ENCODE measurements at regions of chr20 and their contacts with region 1.

Region 1: GRCh38 chr20:57346477-57346876 is 4.6 kb upstream of the RAE1 start:
- DNase-seq: peak; percentile 55 to 78
- ATAC-seq: peak; percentile 35 to 59 (median 40)
- H3K4me3 ChIP-seq: no peak overlapping the region
- H3K4me3 Mint-ChIP-seq: no peak overlapping the region
- H3K27ac ChIP-seq: no peak overlapping the region
- H3K27ac Mint-ChIP-seq: no peak overlapping the region
- H3K4me1 ChIP-seq: peaks cover under 1% of the 10 kb centered on the region
- H3K4me1 Mint-ChIP-seq: peaks cover 0 to 4% of the 10 kb centered on the region in 2 donors
- H3K27me3 ChIP-seq: peaks cover 3% of the 10 kb centered on the region
- H3K27me3 Mint-ChIP-seq: peaks cover 11 to 27% of the 10 kb centered on the region in 2 donors
- CTCF ChIP-seq: peak; percentile 77

Region 2: DNA sequence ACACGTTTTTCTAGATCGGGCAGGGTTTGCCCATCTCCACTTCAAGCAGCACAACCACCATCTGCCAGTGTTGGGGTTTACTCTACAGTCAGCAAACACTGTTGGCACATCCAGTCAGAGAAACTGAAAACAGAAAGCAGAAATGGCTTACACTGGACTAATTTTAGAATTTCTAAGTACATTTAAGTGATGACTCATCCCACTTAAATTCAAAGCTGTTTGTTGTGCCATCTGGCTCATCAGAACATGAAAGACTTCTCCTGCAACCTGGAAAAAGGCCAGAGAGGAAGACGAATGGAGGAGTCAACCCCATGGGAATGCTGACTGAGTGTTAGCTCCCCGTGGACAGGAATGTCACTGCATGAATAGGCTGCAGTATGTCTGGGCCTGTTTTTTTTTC is 791.6 kb before region 1 on chr20:
- intact Hi-C with region 1: loop called (anchors 2 kb)
- DNase-seq: no peak
- ATAC-seq: no peak
- H3K4me3 ChIP-seq: no peak overlapping the region
- H3K4me3 Mint-ChIP-seq: no peak overlapping the region
- H3K27ac ChIP-seq: no peak overlapping the region
- H3K27ac Mint-ChIP-seq: no peak overlapping the region
- H3K4me1 ChIP-seq: no peaks in the 10 kb centered on the region
- H3K4me1 Mint-ChIP-seq: no peaks in the 10 kb centered on the region
- H3K27me3 ChIP-seq: no peaks in the 10 kb centered on the region
- H3K27me3 Mint-ChIP-seq: no peaks in the 10 kb centered on the region
- CTCF ChIP-seq: no peak

Region 3: GRCh38 chr20:57473246-57474048 is 127.0 kb after region 1 on chr20:
- intact Hi-C with region 1: no loop called
- DNase-seq: peak; percentile 44 to 52
- ATAC-seq: peak; percentile 87 to 94 (median 91)
- H3K4me3 ChIP-seq: no peak overlapping the region
- H3K4me3 Mint-ChIP-seq: peak overlapping the region; percentile 60
- H3K27ac ChIP-seq: peak overlapping the region; percentile 17
- H3K27ac Mint-ChIP-seq: peak overlapping the region; percentile 74 to 87
- H3K4me1 ChIP-seq: peaks cover 61% of the 10 kb centered on the region
- H3K4me1 Mint-ChIP-seq: peaks cover 33 to 50% of the 10 kb centered on the region in 2 donors
- H3K27me3 ChIP-seq: no peaks in the 10 kb centered on the region
- H3K27me3 Mint-ChIP-seq: peaks cover 0 to 8% of the 10 kb centered on the region in 2 donors
- CTCF ChIP-seq: no peak